Naive thymus-derived CD4-positive, alpha-beta T cell (primary cell): ENCODE measurements at regions of chr17 and their contacts with region 1.

Region 1: DNA sequence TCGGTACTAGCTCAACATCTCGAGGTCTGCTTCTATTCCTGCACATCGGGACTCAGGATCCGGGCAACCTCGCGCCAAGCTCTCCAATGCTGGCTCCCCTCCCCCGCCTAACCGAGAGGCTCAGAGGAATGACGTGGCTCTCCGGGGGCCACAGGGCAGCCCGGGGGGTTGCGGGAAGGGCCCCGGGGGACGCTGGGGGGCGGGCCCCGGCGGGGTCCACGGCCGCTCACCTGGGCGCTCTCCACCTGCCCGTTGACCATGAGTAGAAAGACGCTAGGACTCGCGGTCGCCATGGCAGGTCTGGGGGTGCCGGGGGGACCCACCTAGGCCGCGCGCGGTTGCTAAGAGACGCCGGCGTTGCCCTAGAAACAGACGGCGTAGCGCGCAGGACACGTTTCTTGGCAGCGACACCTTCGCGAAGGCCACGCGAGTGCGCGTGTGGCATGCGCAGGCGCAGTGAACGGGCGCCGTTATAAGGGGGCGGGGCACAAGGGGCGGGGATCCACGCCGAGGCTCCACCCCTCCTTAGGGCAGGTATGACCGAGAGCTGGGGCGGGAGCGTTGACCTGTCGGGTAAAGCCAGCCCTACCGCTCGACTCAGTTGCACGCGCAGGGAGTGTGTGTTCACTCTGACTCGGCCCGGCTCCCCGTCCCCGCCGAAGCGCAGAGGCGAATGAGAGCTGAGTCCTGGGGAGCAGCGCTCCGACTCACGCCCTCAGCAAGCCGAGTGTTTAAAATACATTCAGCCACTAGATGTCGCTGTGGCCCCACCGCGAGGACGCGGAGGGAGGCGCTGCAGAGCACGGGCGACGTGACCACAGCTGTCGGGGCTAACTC is at the start of gene B9D1:
- DNase-seq: peak; percentile 90 to 97 (median 92)
- ATAC-seq: peak; percentile 96
- H3K4me3 ChIP-seq: peak within 1 kb of the TSS; percentile 94
- H3K4me3 Mint-ChIP-seq: peak within 1 kb of the TSS; percentile 75 to 96 (median 92)
- H3K27ac ChIP-seq: peak within 1 kb of the TSS; percentile 66
- H3K27ac Mint-ChIP-seq: peak within 1 kb of the TSS; percentile 63 to 93 (median 91)
- H3K4me1 ChIP-seq: peaks cover 6 to 11% of the 10 kb centered on the region in 2 donors
- H3K4me1 Mint-ChIP-seq: peaks cover 0 to 21% (median 6%) of the 10 kb centered on the region in 7 donors
- H3K27me3 ChIP-seq: no peaks in the 10 kb centered on the region
- H3K27me3 Mint-ChIP-seq: peaks cover 7 to 25% (median 19%) of the 10 kb centered on the region in 5 donors
- total RNA-seq, gene B9D1: 0.58 to 5.0 (median 2.4) TPM

Region 2: DNA sequence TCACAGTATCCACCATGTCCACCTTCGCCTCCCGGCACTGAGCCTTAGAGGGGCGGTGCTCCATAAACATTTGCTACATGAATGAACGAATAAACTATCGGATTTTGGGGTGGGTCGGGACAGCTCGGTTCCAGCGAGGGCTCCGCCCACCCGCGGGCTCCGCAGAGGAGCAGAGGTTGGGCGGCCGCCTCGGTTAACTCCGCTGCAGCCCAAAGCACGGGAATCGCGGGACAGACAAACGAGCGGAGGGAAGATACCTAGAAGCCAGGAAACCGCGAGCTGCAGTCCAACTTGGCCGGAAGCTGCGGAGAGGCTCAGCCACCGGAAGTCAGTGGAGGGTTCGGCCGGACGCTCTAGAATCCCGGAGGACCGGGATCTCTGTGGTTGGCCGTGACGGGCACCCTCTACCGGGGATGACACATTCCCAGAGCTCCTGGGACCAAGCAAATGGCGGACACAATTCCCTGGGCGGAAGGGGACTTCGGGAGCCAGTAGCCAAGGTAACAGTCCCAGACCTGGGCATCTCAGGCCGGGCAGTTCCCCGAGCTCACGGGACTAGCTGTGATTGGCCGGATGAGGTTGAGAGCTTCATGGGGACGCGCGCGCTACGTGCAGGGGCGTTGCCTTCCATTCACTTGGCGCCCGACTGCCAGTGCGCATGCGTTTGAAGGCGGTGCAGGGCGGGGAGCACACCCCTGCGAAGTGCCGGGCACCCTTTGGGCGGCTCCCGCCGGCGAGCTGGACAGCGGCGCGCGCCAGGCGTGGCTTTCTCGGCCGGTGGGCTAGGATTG is 15.3 kb after region 1 on chr17:
- CTCF ChIA-PET with region 1: interaction called, 29 read pairs
- POLR2A ChIA-PET with region 1: interaction called, 26 read pairs
- intact Hi-C with region 1: loop called (anchors 1 kb)
- DNase-seq: peak; percentile 85 to 95 (median 92)
- ATAC-seq: peak; percentile 89
- H3K4me3 ChIP-seq: peak overlapping the region; percentile 99
- H3K4me3 Mint-ChIP-seq: peak overlapping the region; percentile 83 to 100 (median 97)
- H3K27ac ChIP-seq: peak overlapping the region; percentile 81
- H3K27ac Mint-ChIP-seq: peak overlapping the region; percentile 83 to 99 (median 97)
- H3K4me1 ChIP-seq: peaks cover 2 to 6% of the 10 kb centered on the region in 2 donors
- H3K4me1 Mint-ChIP-seq: peaks cover 6 to 29% (median 20%) of the 10 kb centered on the region in 7 donors
- H3K27me3 ChIP-seq: no peaks in the 10 kb centered on the region
- H3K27me3 Mint-ChIP-seq: no peaks in the 10 kb centered on the region

Region 3: DNA sequence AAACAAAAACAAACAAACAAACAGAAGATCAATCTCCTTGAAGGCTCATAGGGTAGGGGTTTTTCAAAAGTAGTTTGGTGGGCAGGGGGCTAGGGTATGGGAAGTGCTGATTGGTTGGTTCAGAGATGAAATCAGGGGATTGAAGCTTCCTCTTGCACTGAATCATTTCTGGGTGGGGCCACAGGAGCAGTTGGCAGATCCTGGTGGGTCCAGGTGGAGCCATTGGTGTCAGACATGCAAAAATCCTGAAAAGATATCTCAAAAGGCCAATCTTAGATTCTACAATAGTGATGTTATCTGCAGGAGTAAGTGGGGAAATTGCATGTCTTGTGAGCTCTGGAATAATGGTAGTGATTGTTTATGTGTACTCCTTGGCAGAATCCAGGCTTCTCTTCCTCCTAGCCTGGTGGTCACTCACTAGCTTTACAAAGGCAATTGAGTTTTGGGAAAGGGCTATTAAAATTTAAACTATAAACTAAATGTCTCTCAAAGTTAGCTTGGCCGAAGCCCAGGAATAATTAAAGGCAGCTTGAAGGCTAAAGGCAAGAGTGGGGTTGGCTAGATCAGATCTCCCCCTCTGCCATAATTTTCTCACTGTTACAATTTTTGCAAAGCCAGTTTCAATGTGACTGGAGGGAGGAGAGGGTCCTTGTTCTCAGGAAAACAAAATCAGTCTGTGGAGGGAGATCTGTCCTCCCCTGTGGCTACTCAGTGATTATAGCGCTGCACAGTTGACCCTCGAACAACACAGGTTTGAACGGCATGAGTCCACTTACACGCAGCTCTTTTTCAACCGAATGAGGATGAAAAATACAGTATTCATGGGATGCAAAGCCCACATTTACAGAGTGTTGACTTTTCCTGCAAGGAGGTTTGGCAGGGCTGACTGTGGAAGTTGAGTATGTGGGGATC is 93.8 kb after region 1 on chr17:
- CTCF ChIA-PET with region 1: interaction called, 12 read pairs
- POLR2A ChIA-PET with region 1: no interaction called
- intact Hi-C with region 1: no loop called
- DNase-seq: no peak
- ATAC-seq: no peak
- H3K4me3 ChIP-seq: no peak overlapping the region
- H3K4me3 Mint-ChIP-seq: peak overlapping the region in 3 of 10 donors; percentile 12 to 41 (median 20)
- H3K27ac ChIP-seq: no peak overlapping the region
- H3K27ac Mint-ChIP-seq: peak overlapping the region in 2 of 9 donors; percentile 11 to 34
- H3K4me1 ChIP-seq: peaks cover 1 to 5% of the 10 kb centered on the region in 2 donors
- H3K4me1 Mint-ChIP-seq: peaks cover 5 to 42% (median 19%) of the 10 kb centered on the region in 7 donors
- H3K27me3 ChIP-seq: no peaks in the 10 kb centered on the region
- H3K27me3 Mint-ChIP-seq: peaks cover 0 to 32% (median 0%) of the 10 kb centered on the region in 5 donors

Region 4: DNA sequence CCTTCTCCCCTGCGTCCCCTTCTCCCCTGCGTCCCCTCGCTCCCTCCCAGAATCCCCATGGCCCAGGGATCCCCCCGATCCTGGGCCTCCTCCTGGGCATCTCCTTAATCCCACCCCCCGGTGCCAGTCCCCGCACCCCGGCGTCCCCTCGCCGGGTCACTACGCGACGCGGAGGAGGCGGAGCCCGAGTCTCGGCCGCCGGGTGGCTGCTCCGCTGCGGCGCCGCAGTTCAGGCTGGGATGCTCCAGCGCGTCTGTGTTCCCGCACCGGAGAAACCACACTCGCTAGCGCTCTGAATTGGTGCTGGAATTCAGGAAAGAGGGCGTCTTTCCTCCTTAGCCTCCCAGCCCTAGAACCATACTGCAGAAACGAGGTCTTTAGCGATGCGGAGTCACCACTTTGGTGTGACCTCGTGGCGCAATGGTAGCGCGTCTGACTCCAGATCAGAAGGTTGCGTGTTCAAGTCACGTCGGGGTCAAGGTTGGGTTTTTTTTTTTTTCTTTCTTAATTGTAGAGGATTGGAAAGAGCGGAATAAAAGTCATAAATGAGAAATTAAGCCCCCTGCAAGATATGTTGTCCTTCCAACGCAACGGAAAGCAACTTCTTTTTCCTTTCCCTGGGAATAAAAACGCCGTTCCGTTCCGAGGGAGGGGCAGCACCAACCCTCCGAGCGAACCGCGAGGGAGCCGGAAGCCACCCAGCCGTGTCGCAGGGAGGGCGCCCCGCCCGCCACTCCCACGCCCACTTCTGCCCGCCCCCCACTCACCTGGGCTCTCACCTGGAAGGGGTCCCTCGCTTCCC is 145.5 kb after region 1 on chr17:
- CTCF ChIA-PET with region 1: no interaction called
- POLR2A ChIA-PET with region 1: no interaction called
- intact Hi-C with region 1: loop called in 1 of 2 experiments (anchors 1 kb)
- DNase-seq: peak; percentile 82 to 96 (median 90)
- ATAC-seq: peak; percentile 85
- H3K4me3 ChIP-seq: peak overlapping the region; percentile 99
- H3K4me3 Mint-ChIP-seq: peak overlapping the region; percentile 87 to 99 (median 91)
- H3K27ac ChIP-seq: peak overlapping the region; percentile 67
- H3K27ac Mint-ChIP-seq: peak overlapping the region; percentile 95 to 99 (median 96)
- H3K4me1 ChIP-seq: peaks cover 0 to 6% of the 10 kb centered on the region in 2 donors
- H3K4me1 Mint-ChIP-seq: peaks cover 8 to 13% (median 11%) of the 10 kb centered on the region in 7 donors
- H3K27me3 ChIP-seq: no peaks in the 10 kb centered on the region
- H3K27me3 Mint-ChIP-seq: peaks cover 0 to 24% (median 0%) of the 10 kb centered on the region in 5 donors

Region 5: DNA sequence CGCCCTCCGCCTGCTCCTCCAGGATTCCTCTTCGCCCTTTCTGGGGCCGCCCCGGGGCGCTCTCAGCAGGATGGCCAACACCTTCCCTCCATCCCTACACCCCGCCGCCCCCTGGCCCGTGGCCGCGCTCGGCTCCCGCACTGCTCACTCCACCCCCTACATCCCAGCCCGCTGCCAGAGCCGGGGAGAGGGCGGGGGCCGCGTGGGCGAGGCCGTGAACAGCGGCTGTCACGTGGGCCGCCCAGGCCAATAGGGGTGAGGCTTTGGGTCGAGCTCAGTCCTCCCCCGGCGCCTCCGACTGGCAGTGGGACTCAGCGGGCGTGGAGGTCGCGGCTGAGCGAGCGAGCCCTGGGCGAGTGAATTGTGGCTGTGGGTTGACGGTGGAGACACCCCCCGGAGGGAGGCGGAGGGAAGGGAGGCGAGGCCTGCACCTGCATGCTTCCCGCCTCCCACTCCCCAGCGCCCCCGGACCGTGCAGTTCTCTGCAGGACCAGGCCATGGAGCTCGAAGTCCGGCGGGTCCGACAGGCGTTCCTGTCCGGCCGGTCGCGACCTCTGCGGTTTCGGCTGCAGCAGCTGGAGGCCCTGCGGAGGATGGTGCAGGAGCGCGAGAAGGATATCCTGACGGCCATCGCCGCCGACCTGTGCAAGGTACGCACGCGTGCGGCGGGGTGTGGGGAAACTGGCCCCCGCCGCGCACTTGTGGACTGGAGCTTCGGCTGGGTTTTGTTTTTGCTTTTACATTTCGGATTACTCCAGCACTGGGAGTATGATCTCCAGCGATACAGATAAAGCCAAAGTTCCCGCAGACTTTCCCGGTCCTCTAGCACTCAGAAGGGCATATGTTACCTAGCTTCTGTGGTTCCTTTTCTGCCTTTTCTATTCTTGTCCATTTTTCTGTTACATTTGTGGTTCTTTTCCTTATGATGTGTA is 286.2 kb after region 1 on chr17 and contains the start of gene ALDH3A2:
- CTCF ChIA-PET with region 1: no interaction called
- POLR2A ChIA-PET with region 1: interaction called, 8 read pairs
- intact Hi-C with region 1: loop called (anchors 2 kb)
- DNase-seq: peak; percentile 80 to 97 (median 88)
- ATAC-seq: peak; percentile 98
- H3K4me3 ChIP-seq: peak within 1 kb of the TSS; percentile 90
- H3K4me3 Mint-ChIP-seq: peak within 1 kb of the TSS; percentile 91 to 99 (median 96)
- H3K27ac ChIP-seq: peak within 1 kb of the TSS; percentile 67
- H3K27ac Mint-ChIP-seq: peak within 1 kb of the TSS; percentile 93 to 98 (median 94)
- H3K4me1 ChIP-seq: peaks cover 0 to 6% of the 10 kb centered on the region in 2 donors
- H3K4me1 Mint-ChIP-seq: peaks cover 31 to 47% (median 39%) of the 10 kb centered on the region in 7 donors
- H3K27me3 ChIP-seq: no peaks in the 10 kb centered on the region
- H3K27me3 Mint-ChIP-seq: peaks cover 0 to 13% (median 0%) of the 10 kb centered on the region in 5 donors
- total RNA-seq, gene ALDH3A2: 26.3 to 53.4 (median 32.4) TPM

Region 6: GRCh38 chr17:19867064-19867313 is 504.5 kb after region 1 on chr17:
- CTCF ChIA-PET with region 1: no interaction called
- POLR2A ChIA-PET with region 1: no interaction called
- intact Hi-C with region 1: loop called in 1 of 2 experiments (anchors 5 kb)
- DNase-seq: peak in 6 of 9 donors; percentile 26 to 51 (median 46)
- ATAC-seq: peak; percentile 58
- H3K4me3 ChIP-seq: peak overlapping the region; percentile 78
- H3K4me3 Mint-ChIP-seq: peak overlapping the region; percentile 77 to 88 (median 84)
- H3K27ac ChIP-seq: peak overlapping the region; percentile 72
- H3K27ac Mint-ChIP-seq: peak overlapping the region; percentile 62 to 82 (median 75)
- H3K4me1 ChIP-seq: peaks cover 4 to 34% of the 10 kb centered on the region in 2 donors
- H3K4me1 Mint-ChIP-seq: peaks cover 9 to 66% (median 45%) of the 10 kb centered on the region in 7 donors
- H3K27me3 ChIP-seq: no peaks in the 10 kb centered on the region
- H3K27me3 Mint-ChIP-seq: no peaks in the 10 kb centered on the region